Common myeloid progenitor, CD34-positive (primary cell): ENCODE measurements at regions of chr13 and their contacts with region 1.

Region 1: GRCh38 chr13:46552889-46553510 is at the start of gene LRCH1:
- DNase-seq: peak; percentile 86 to 96 (median 89)
- H3K4me3 ChIP-seq: peak within 1 kb of the TSS; percentile 81 to 95 (median 94)
- H3K27ac ChIP-seq: peak within 1 kb of the TSS; percentile 78 to 88
- H3K4me1 ChIP-seq: peaks cover 21 to 51% (median 36%) of the 10 kb centered on the region in 4 experiments
- H3K27me3 ChIP-seq: no peaks in the 10 kb centered on the region

Region 2: GRCh38 chr13:46541210-46541609 is 11.8 kb before region 1 on chr13:
- CTCF ChIA-PET with region 1: interaction called, 12 read pairs
- POLR2A ChIA-PET with region 1: no interaction called
- DNase-seq: no peak
- H3K4me3 ChIP-seq: no peak overlapping the region
- H3K27ac ChIP-seq: no peak overlapping the region
- H3K4me1 ChIP-seq: no peaks in the 10 kb centered on the region
- H3K27me3 ChIP-seq: no peaks in the 10 kb centered on the region

Region 3: GRCh38 chr13:46603165-46603603 is 50.2 kb after region 1 on chr13:
- CTCF ChIA-PET with region 1: interaction called, 15 read pairs
- POLR2A ChIA-PET with region 1: no interaction called
- DNase-seq: peak in 2 of 3 donors; percentile 44 to 58
- H3K4me3 ChIP-seq: no peak overlapping the region
- H3K27ac ChIP-seq: no peak overlapping the region
- H3K4me1 ChIP-seq: peaks cover 22 to 76% (median 54%) of the 10 kb centered on the region in 4 experiments
- H3K27me3 ChIP-seq: no peaks in the 10 kb centered on the region

Region 4: DNA sequence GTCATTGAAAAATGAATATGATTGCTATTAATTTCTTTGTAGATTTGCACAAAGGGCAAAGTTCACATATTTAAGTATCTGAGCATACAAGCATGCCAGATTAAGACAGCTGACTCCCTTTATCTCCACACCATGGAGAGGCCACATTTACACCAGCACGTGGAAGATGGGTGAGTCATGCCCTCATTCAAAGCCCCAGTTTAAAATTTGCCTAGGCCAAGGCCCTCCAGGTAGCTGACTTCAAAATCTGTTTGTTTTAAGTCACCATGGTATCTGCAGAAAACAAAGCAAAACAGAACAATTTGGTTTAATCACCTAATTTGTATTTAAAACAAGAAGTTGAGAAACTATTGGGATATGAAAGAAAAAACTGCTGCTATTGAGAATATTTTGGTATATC is 134.8 kb after region 1 on chr13:
- CTCF ChIA-PET with region 1: interaction called, 23 read pairs
- POLR2A ChIA-PET with region 1: no interaction called
- DNase-seq: peak; percentile 75 to 95 (median 91)
- H3K4me3 ChIP-seq: peak overlapping the region in 1 of 7 experiments; percentile 31
- H3K27ac ChIP-seq: peak overlapping the region; percentile 89 to 91
- H3K4me1 ChIP-seq: peaks cover 9 to 42% (median 28%) of the 10 kb centered on the region in 4 experiments
- H3K27me3 ChIP-seq: no peaks in the 10 kb centered on the region

Region 5: GRCh38 chr13:46721054-46721453 is 168.1 kb after region 1 on chr13:
- CTCF ChIA-PET with region 1: interaction called, 29 read pairs
- POLR2A ChIA-PET with region 1: interaction called, 3 read pairs
- DNase-seq: peak; percentile 53 to 78 (median 68)
- H3K4me3 ChIP-seq: no peak overlapping the region
- H3K27ac ChIP-seq: no peak overlapping the region
- H3K4me1 ChIP-seq: peaks cover 0 to 28% (median 17%) of the 10 kb centered on the region in 4 experiments
- H3K27me3 ChIP-seq: no peaks in the 10 kb centered on the region